Breast epithelium (tissue), 4 donors: ENCODE measurements at regions of chr2 and their contacts with region 1.

Region 1: GRCh38 chr2:240397924-240398645 is 37.4 kb upstream of the GPC1 start:
- DNase-seq: peak in 1 of 2 donors; percentile 24
- H3K4me3 ChIP-seq: no peak overlapping the region
- H3K27ac ChIP-seq: no peak overlapping the region
- H3K4me1 ChIP-seq: no peaks in the 10 kb centered on the region
- H3K27me3 ChIP-seq: peaks cover 0 to 6% of the 10 kb centered on the region in 2 donors
- CTCF ChIP-seq: no peak
- POLR2A ChIP-seq: no peak

Region 2: GRCh38 chr2:238523158-238524110 is 1874.7 kb before region 1 on chr2:
- intact Hi-C with region 1: no loop called
- DNase-seq: peak in 1 of 2 donors; percentile 37
- H3K4me3 ChIP-seq: peak overlapping the region in 1 of 3 donors; percentile 26
- H3K27ac ChIP-seq: peak overlapping the region; percentile 7 to 55
- H3K4me1 ChIP-seq: no peaks in the 10 kb centered on the region
- H3K27me3 ChIP-seq: no peaks in the 10 kb centered on the region
- CTCF ChIP-seq: no peak
- POLR2A ChIP-seq: no peak

Region 3: DNA sequence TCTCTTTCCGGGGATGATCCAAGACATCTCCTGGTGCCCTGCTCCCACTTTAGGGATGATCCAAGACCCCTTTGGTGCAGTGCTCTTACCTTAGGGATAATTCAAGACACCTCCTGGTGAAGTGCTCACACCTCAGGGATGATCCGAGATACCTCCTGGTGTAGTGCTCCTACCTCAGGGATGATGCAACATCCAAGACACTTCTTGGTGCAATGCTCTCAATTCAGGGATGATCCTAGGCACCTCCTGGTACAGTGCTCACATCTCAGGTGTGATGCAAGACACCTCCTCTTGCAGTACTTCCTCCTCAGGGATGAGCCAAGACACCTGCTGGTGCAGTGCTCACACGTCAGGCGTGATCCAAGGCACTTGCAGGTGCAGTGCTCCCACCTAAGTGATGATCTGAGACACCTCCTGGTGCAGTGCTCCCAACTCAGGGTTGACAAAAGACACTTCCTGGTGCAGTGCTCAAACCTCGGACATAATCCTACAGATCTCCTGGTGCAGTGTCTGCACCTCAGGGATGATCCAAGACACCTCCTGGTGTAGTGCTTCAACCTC is 1849.1 kb before region 1 on chr2:
- intact Hi-C with region 1: loop called (anchors 5 kb)
- DNase-seq: no peak
- H3K4me3 ChIP-seq: no peak overlapping the region
- H3K27ac ChIP-seq: no peak overlapping the region
- H3K4me1 ChIP-seq: no peaks in the 10 kb centered on the region
- H3K27me3 ChIP-seq: no peaks in the 10 kb centered on the region
- CTCF ChIP-seq: no peak
- POLR2A ChIP-seq: no peak

Region 4: DNA sequence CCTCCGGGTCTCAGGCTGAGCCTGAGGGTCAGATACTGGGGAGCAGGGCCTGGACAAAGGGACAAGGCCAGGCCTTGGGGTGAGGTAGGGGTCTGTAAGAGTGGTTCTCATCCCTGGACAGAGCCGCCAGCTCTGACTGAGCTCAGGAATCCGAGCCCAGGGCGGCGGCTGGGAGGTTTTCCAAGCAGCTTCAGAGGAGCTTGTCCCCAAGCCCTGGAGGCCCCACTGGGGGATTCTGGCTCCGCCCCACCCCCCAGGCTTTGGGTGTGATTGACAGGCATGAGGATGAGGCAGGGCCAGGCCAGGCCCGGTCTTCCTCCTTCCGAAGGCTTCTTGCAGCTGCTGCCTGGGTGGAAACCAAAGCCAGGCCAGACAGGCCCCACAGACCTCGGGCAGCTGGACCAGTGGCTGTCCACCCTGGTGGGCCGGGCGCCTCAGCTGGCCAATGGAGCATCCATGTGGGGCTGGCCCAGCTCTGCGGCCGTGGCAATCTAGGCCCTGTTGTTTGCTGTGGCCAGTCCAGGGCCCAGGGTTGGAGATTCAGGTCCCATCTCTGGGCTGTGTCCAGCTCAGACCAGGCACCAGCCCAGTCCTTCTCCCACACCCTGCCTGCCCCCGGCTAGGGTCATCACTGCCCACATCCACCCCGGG is 14.3 kb after region 1 on chr2:
- intact Hi-C with region 1: no loop called
- DNase-seq: peak in 1 of 2 donors; percentile 43
- H3K4me3 ChIP-seq: no peak overlapping the region
- H3K27ac ChIP-seq: no peak overlapping the region
- H3K4me1 ChIP-seq: no peaks in the 10 kb centered on the region
- H3K27me3 ChIP-seq: no peaks in the 10 kb centered on the region
- CTCF ChIP-seq: no peak
- POLR2A ChIP-seq: no peak

Region 5: GRCh38 chr2:240624950-240625621 is 227.0 kb after region 1 on chr2 and contains the start of gene GPR35:
- intact Hi-C with region 1: no loop called
- DNase-seq: peak in 1 of 2 donors; percentile 49
- H3K4me3 ChIP-seq: no peak within 1 kb of the TSS
- H3K27ac ChIP-seq: no peak within 1 kb of the TSS
- H3K4me1 ChIP-seq: no peaks in the 10 kb centered on the region
- H3K27me3 ChIP-seq: no peaks in the 10 kb centered on the region
- CTCF ChIP-seq: no peak
- POLR2A ChIP-seq: no peak
- total RNA-seq, gene GPR35: 1.6 to 4.7 (median 2.6) TPM